Posterior cingulate gyrus (tissue), 11 donors: ENCODE measurements at regions of chr3 and their contacts with region 1.

Region 1: DNA sequence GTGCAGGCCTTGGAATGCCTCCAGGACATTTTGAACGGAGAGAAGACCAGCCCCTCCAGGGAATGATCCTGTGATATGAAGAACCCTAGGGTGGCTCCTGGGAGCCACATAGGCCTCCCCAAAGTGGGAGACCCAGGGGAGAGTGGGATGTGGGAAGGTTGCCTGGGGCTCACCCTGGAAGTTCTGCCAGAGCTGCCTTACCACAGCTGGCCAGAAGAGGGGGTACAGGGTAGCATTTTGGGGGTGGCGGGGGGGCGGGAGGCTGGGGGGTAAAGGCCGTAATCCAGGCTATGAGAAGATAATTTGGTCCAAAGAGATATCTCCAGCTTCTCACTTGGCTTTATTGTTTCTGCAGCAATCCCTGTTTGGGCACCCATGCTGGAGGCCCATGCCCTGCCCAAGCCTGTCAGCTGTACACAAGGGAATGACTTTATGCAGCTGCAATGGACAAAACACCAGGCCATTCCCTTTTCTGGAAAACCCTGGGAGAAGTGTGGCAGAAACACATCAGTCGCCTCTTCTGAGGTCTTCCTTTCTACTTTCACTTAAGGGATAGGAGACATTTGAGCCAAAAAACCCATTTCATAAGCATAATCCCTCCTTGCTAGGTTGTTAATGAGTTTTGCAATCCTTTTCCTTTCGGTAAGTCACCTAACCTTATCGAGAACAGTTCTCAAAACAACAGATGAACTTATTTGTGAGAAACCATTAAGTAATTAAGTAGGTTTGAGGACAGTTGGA is 11.0 kb upstream of the MUSTN1 start:
- DNase-seq: peak in 5 of 10 donors; percentile 42 to 67 (median 46)

Region 2: GRCh38 chr3:52881871-52882270 is 36.0 kb after region 1 on chr3:
- intact Hi-C with region 1: loop called (anchors 2 kb)
- DNase-seq: no peak

Region 3: DNA sequence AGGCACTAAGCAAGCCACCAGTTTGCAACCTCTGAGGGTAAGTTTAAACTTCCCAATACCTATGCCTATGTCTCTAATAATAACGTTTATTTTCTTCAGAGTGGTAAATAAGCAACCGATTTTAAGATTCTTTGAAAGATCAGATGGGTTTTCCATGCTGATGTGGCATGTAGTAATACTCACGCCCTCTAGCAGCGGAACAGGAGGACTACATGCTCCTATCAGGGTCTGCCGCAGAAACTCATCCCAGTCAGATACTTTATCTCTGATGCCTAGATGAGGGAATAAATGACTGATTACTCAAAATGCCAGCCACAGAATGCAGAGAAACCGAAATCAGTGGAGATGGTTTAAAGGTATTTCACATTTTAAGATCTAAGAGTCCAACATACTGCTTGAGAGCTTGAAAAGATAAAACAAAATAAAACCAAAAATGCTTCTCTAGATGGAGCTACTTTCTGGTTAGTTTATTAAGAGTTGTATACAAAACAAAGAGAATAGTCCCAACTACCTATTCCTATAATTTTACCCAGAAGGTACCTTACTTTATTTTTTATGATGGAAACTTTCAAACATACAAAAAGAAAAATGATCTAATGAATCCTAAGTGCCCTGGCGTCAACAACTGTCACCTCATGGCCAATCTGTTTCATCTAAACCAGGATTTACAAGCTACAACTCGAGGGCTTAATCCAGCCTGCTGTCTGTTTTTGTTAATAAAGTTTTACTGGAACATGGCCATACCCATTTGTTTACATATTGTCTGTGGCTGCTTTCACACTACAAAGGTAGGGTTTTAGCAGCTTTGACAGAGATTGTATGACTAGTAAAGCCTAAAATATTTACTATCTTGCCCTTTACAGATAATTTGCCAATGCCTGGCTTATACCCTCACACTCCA is 89.0 kb after region 1 on chr3:
- intact Hi-C with region 1: loop called (anchors 1 kb)
- DNase-seq: peak in 7 of 10 donors; percentile 12 to 89 (median 40)